Uterus (tissue), 4 donors: ENCODE measurements at regions of chr2 and their contacts with region 1.

Region 1: DNA sequence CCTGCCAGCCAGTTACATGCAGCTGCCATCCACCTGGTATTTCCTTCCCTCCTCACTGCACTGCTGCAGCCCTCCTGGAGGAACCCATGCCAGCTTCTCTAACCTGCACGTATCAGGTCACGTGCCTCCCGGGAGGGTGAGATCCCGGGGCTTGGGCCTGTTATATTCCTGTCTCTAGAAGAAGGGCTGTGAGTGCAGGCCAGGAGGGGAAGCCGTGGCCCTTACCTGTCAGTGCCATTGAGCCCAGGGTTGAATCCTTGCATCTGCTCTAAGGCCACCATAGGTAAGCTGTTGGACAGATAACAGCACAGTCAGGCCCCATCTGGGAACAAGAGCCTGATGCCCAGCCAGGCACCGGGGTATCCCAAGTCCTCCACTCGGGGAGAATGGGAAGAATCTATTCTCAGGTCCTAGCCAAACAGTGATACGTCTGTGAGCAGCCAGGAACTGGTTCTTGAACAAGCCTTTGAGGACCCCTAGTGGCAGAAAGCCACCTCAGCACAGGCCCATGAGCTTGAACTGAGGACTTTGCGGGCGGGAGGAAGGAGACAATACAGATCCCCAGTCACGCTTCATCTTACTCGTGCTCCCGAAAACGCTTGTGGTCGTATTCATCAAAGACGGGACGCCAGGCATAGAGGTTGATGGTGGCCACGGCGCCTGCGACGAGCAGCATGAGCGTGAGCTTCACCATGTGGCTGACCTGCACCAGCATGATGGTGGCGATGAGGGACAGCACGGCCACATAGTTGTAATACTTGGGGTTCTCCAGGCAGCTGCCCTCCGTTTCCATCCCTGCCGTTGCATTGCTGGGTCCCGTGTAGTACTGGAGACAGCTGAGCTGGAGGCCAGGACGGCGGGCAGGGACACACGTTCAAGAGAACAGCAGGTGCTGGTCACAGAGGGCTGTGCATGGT is 34.4 kb downstream of the CENPO start:
- DNase-seq: peak; percentile 80 to 86
- H3K4me3 ChIP-seq: no peak overlapping the region
- H3K27ac ChIP-seq: peak overlapping the region; percentile 12 to 27
- H3K4me1 ChIP-seq: no peaks in the 10 kb centered on the region
- H3K27me3 ChIP-seq: no peaks in the 10 kb centered on the region
- CTCF ChIP-seq: peak; percentile 87 to 91 (median 88)
- POLR2A ChIP-seq: no peak

Region 2: DNA sequence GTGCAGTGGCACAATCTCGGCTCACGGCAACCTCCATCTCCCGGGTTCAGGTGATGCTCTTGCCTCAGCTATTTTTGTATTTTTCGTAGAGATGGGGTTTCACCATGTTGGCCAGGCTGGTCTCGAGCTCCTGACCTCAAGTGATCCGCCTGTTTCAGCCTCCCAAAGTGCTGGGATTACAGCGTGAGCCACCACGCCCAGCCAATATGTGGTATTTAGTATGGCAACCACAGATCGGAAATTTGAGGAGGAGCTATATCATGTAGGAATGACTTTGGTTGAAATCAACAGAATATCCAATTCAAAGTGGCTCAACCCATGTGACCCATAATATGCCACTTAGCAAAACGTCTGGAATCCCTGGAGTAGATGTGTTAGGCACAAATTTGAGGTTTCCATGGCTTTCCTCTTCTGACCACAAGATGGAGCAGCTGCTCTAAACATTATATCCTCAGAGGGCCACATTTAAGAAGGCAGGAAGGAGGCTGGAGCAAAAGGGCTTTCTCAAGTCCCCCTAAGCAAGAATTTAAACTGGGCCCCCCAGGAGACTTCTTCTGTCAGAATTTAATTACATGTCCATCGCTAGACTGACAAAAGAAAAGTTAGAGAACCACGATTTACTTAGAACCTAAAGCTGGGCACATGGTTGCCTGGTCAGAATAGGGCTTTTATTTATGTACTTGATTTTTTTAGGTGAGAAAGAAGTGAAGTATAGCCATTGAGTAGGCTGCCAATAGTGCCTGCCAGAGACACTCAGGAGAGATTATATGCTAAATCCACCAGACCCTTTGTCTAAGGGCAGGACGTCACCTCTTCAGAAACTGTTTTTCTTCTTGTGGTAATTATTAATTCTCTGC is 417.7 kb before region 1 on chr2:
- intact Hi-C with region 1: loop called (anchors 5 kb)
- DNase-seq: peak in 1 of 2 donors; percentile 52
- H3K4me3 ChIP-seq: no peak overlapping the region
- H3K27ac ChIP-seq: no peak overlapping the region
- H3K4me1 ChIP-seq: no peaks in the 10 kb centered on the region
- H3K27me3 ChIP-seq: no peaks in the 10 kb centered on the region
- CTCF ChIP-seq: peak; percentile 80 to 92 (median 84)
- POLR2A ChIP-seq: no peak

Region 3: GRCh38 chr2:25323042-25323514 is 495.5 kb after region 1 on chr2:
- intact Hi-C with region 1: no loop called
- DNase-seq: no peak
- H3K4me3 ChIP-seq: no peak overlapping the region
- H3K27ac ChIP-seq: peak overlapping the region; percentile 50 to 59
- H3K4me1 ChIP-seq: peaks cover 4 to 9% of the 10 kb centered on the region in 2 donors
- H3K27me3 ChIP-seq: no peaks in the 10 kb centered on the region
- CTCF ChIP-seq: no peak
- POLR2A ChIP-seq: no peak